A549 (cell line): ENCODE measurements at regions of chr11 and their contacts with region 1.

Region 1: DNA sequence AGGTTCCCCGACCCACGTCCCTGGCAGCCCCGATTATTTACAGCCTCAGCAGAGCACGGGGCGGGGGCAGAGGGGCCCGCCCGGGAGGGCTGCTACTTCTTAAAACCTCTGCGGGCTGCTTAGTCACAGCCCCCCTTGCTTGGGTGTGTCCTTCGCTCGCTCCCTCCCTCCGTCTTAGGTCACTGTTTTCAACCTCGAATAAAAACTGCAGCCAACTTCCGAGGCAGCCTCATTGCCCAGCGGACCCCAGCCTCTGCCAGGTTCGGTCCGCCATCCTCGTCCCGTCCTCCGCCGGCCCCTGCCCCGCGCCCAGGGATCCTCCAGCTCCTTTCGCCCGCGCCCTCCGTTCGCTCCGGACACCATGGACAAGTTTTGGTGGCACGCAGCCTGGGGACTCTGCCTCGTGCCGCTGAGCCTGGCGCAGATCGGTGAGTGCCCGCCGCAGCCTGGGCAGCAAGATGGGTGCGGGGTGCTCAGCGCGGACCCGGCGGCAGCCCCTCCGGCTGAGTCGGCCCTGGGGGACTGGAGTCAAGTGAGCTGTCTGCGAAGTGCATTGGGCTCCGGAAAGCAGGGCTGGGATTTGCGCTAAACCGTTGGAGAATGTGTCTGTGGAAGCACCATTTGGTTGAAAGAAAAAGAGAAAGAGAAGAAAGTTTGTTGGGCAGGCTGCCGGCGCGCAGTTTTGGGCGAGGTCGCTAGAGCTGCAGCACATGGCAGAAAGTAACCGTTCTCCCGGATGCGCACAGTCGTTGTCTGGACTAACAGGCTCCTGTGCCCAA is at the start of gene CD44:
- DNase-seq: peak; percentile 80 to 83
- ATAC-seq: peak; percentile 68 to 77
- H3K4me3 ChIP-seq: peak within 1 kb of the TSS; percentile 79
- H3K27ac ChIP-seq: peak within 1 kb of the TSS; percentile 96 to 98
- H3K4me1 ChIP-seq: peaks cover 60% of the 10 kb centered on the region
- CTCF ChIP-seq: no peak
- EP300 ChIP-seq: no peak
- POLR2A ChIP-seq: peak; percentile 92
- RAD21 ChIP-seq: peak in 1 of 2 experiments; percentile 9; a peak in 1 of 5 replicates
- polyA plus RNA-seq, gene CD44: 309 and 350 TPM in 2 replicates

Region 2: DNA sequence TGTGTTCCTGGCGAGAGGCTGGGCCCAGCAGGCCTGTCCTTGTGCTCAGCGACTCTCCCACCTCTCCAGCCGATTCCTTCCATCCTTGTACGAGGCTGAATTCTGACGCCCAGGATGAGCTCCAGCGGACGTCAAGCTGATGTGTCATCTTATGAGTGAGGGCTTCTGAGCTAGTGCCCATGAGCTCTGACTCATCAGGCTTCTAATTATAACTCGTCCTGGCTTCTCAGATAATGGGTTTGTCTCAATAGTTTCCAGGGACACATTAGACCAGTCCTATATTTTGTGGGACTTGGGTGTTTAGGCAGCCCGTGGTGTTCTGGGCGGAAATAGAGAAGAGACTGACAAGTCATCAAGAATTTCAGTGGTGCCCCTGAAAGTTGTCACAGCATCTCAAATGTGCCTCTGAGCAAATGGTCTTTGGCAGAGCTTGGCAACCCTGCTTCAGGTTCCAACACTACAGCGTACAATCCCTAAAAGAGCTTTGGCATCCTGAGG is 108.4 kb before region 1 on chr11:
- CTCF ChIA-PET with region 1: no interaction called
- POLR2A ChIA-PET with region 1: interaction called, 20 read pairs
- DNase-seq: peak; percentile 77 to 91
- ATAC-seq: peak; percentile 99
- H3K4me3 ChIP-seq: no peak overlapping the region
- H3K27ac ChIP-seq: peak overlapping the region; percentile 73 to 82
- H3K4me1 ChIP-seq: peaks cover 29% of the 10 kb centered on the region
- CTCF ChIP-seq: no peak
- EP300 ChIP-seq: 0 out of 5 replicates have a peak, but pooled peaks of 1 of the 2 experiments have one; percentile 36
- POLR2A ChIP-seq: no peak
- RAD21 ChIP-seq: 0 out of 5 replicates have a peak, but pooled peaks of 1 of the 2 experiments have one; percentile 19

Region 3: GRCh38 chr11:35165423-35166368 is 26.6 kb after region 1 on chr11:
- CTCF ChIA-PET with region 1: interaction called, 5 read pairs
- POLR2A ChIA-PET with region 1: interaction called, 10 read pairs
- DNase-seq: peak in 1 of 2 experiments; percentile 31
- ATAC-seq: peak; percentile 40 to 48; a peak in 4 of 6 replicates
- H3K4me3 ChIP-seq: no peak overlapping the region
- H3K27ac ChIP-seq: peak overlapping the region; percentile 76 to 87
- H3K4me1 ChIP-seq: peaks cover 98% of the 10 kb centered on the region
- CTCF ChIP-seq: no peak
- EP300 ChIP-seq: peak; percentile 88 to 92; a peak in 3 of 5 replicates
- POLR2A ChIP-seq: no peak
- RAD21 ChIP-seq: peak; percentile 1 to 43; a peak in 2 of 5 replicates

Region 4: DNA sequence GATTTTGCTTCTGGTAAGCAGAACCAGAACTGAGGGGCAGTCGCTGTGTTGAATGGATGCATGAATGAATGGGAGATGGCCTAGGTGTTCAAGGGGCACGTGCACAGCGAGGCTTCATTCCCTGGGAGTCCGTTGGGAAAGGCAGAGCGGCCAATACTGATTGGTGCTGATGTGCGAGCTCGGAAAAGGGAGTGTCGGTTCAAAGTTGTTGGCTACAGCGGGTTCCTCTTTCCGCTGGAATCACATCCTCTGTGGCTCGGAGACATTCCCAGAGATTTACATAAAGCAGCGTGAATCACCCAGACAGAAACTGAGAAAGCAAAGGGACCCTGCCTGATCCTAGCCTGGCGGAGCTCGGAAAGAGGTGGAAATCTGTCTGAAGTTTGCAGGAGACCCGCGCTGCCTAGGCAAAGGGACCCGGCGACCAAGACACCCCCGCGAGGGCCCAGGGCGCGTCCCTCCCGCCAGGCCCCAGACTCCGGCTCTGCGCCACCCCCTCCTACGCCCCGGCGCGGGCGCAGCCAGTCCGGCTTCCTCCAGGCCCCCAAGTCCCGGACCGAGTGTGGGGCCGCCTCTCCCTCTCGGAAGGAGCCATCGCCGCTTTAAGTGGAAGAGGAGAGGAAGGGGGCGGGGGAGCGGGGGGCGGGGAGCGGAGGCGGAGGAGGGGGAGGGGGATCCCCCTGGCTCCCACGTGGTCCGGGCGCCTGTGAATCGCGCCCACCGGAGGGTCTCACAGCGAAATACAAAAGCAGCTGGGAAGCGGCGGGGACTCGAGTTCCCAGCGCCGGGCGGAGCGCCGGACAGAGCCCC is 478.8 kb after region 1 on chr11 and contains the start of gene FJX1:
- CTCF ChIA-PET with region 1: no interaction called
- POLR2A ChIA-PET with region 1: no interaction called
- DNase-seq: peak; percentile 81 to 83
- ATAC-seq: peak; percentile 68 to 73
- H3K4me3 ChIP-seq: peak within 1 kb of the TSS; percentile 90
- H3K27ac ChIP-seq: peak within 1 kb of the TSS; percentile 94 to 97
- H3K4me1 ChIP-seq: peaks cover 46% of the 10 kb centered on the region; the same call in 2 of the 3 replicates
- CTCF ChIP-seq: no peak
- EP300 ChIP-seq: peak in 1 of 2 experiments; percentile 27; a peak in 1 of 5 replicates
- POLR2A ChIP-seq: peak; percentile 19; the same call in 1 of the 2 replicates
- RAD21 ChIP-seq: no peak; a peak in 1 of 5 replicates
- polyA plus RNA-seq, gene FJX1: 6.5 and 7.1 TPM in 2 replicates